ENCODE measurements at regions of chr5 and their contacts with region 1.

Region 1: DNA sequence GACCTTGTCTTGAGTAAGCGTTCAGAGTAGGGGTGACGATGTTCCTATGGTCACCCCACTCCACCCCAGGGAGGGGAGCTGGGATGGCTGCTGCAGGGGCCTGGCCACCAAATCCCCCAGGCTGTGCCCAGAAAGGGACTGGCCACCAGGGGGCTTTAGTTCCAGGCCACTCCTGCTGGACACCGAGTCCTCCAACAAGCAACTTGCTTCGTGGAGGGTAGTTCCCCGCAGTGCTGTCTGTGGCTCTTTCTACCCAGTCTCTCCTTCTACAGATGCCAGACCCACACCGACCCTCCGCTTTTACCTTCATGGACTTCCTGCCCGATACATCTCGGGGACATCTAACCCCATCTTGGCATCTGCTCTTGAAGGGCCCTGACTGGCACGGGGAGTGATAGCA is 35.7 kb upstream of the GABRP start:
- DNase-seq: peak in 2 of 7 donors; percentile 19 to 47
- H3K4me3 ChIP-seq: no peak overlapping the region
- H3K27ac ChIP-seq: no peak overlapping the region
- H3K4me1 ChIP-seq: peaks cover 5 to 7% of the 10 kb centered on the region in 2 donors
- H3K27me3 ChIP-seq: peaks cover 9% of the 10 kb centered on the region
- CTCF ChIP-seq: peak in 3 of 6 experiments; percentile 3 to 27 (median 17)
- POLR2A ChIP-seq: no peak

Region 2: DNA sequence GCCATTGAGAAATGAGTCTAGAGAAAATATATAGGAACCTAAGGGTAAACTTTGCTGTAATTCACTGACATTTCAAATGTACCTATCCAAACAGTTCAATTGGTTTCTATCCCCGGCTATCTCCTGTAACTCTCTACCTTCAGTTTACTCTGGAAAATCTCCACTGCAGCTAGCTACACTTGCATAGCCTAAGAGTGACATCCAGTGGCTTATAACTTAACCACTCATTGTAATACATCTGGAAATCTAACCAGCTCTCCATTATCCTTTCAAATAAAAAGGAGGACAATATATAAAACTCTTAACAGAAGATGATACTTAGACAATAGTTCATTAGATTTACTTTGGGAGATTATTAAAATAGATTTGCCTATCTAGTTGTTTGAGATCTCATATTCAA is 1199.5 kb before region 1 on chr5:
- intact Hi-C with region 1: no loop called
- DNase-seq: no peak
- H3K4me3 ChIP-seq: no peak overlapping the region
- H3K27ac ChIP-seq: no peak overlapping the region
- H3K4me1 ChIP-seq: no peaks in the 10 kb centered on the region
- H3K27me3 ChIP-seq: no peaks in the 10 kb centered on the region
- CTCF ChIP-seq: peak in 5 of 6 experiments; percentile 35 to 61 (median 43)
- POLR2A ChIP-seq: no peak

Region 3: GRCh38 chr5:170491479-170491878 is 256.4 kb before region 1 on chr5:
- intact Hi-C with region 1: no loop called
- DNase-seq: peak in 5 of 7 donors; percentile 16 to 61 (median 26)
- H3K4me3 ChIP-seq: no peak overlapping the region
- H3K27ac ChIP-seq: peak overlapping the region in 4 of 5 donors; percentile 20 to 70 (median 47)
- H3K4me1 ChIP-seq: peaks cover 0 to 7% of the 10 kb centered on the region in 2 donors
- H3K27me3 ChIP-seq: no peaks in the 10 kb centered on the region
- CTCF ChIP-seq: peak in 2 of 6 experiments; percentile 12 to 25
- POLR2A ChIP-seq: no peak

Region 4: GRCh38 chr5:170791325-170791954 is 43.6 kb after region 1 on chr5:
- intact Hi-C with region 1: loop called in 1 of 2 experiments (anchors 5 kb)
- DNase-seq: peak; percentile 62 to 87 (median 76)
- H3K4me3 ChIP-seq: no peak overlapping the region
- H3K27ac ChIP-seq: no peak overlapping the region
- H3K4me1 ChIP-seq: no peaks in the 10 kb centered on the region
- H3K27me3 ChIP-seq: no peaks in the 10 kb centered on the region
- CTCF ChIP-seq: peak; percentile 30 to 71 (median 58)
- POLR2A ChIP-seq: no peak

Region 5: GRCh38 chr5:171342362-171343111 is 594.7 kb after region 1 on chr5:
- intact Hi-C with region 1: loop called in 1 of 2 experiments (anchors 10 kb)
- DNase-seq: peak; percentile 25 to 73 (median 47)
- H3K4me3 ChIP-seq: no peak overlapping the region
- H3K27ac ChIP-seq: no peak overlapping the region
- H3K4me1 ChIP-seq: no peaks in the 10 kb centered on the region
- H3K27me3 ChIP-seq: peaks cover 3% of the 10 kb centered on the region
- CTCF ChIP-seq: peak; percentile 47 to 67 (median 58)
- POLR2A ChIP-seq: no peak